ENCODE measurements at regions of chr7 and their contacts with region 1.

Region 1: GRCh38 chr7:106542550-106543220 is 118.3 kb downstream of the CCDC71L start:
- DNase-seq: peak; percentile 80
- H3K4me3 ChIP-seq: no peak overlapping the region
- H3K27ac ChIP-seq: peak overlapping the region; percentile 79
- H3K27me3 ChIP-seq: no peaks in the 10 kb centered on the region
- CTCF ChIP-seq: peak; percentile 78

Region 2: DNA sequence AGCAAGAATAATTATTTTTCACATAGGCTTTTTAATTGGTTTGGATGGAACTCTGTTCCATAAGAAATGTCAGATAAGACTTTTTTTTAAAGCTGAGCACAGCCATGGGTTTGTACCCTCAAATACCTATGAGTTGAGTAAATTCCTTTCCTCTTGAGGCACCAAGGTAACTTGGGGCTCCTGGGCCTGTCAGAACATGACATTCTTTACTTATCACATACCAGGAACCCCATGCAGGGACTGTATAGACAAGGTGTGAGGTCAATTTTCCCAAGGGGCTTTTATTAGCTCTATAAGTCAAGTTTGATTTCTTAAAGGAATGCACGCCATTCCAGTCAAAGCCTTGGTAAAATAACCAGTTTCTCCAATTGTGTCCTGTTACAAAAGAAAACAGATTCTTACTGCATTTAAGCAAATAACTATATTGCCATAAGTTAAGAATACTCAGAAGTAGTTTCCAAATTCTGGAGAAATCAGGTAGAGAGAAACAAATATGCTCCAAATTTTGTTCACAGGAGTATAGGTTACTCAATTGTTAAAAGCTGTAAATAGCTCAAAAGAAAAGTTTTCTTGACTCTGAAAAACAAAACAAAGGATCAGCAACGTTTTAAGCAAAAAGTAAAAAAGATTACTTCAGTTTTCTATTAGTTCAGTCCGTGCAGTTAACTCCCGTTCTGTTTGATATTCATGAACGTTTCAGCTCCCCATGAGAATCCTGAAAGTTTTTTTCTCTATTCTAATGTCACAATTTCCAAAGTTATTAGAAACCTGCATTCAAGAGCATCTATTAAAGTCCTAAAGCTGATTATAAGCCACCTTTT is 90.4 kb before region 1 on chr7:
- CTCF ChIA-PET with region 1: no interaction called
- POLR2A ChIA-PET with region 1: no interaction called
- DNase-seq: no peak
- H3K4me3 ChIP-seq: no peak overlapping the region
- H3K27ac ChIP-seq: no peak overlapping the region
- H3K27me3 ChIP-seq: no peaks in the 10 kb centered on the region
- CTCF ChIP-seq: no peak

Region 3: GRCh38 chr7:106552645-106553445 is 10.2 kb after region 1 on chr7:
- CTCF ChIA-PET with region 1: interaction called, 11 read pairs
- POLR2A ChIA-PET with region 1: no interaction called
- DNase-seq: no peak
- H3K4me3 ChIP-seq: no peak overlapping the region
- H3K27ac ChIP-seq: no peak overlapping the region
- H3K27me3 ChIP-seq: no peaks in the 10 kb centered on the region
- CTCF ChIP-seq: no peak

Region 4: DNA sequence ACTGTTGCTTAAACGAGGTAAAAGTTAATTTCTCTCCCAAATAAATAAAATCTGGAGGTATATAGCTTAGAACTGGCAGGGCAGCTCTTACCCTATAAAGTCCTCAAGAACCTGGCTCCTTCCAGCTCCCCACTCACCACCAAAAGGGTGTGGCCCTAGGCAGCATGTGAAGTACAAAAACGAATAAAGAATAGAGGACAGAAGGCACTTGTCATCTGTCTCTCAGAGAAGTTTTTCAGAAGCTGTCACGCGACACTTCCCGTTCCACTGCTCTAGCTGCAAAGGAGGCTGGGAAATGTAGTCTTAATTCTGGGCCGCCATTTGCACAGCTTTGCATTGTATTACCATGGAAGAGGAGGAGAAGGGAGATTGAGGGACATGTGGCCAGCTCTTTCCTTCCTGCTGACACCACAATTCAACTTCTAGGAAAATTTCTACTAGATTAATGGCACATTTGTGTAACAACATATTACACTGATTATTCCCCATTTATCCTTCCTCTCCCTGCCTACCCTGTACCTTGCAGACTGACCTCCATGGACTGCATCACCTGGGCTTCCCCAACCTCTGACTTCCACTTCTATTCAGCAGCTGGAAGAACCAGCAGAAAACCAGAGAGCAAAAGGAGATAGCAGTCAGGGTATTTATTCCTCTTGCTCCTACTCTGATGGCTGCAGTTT is 56.1 kb after region 1 on chr7:
- CTCF ChIA-PET with region 1: interaction called, 13 read pairs
- POLR2A ChIA-PET with region 1: no interaction called
- DNase-seq: peak; percentile 29
- H3K4me3 ChIP-seq: peak overlapping the region; percentile 55
- H3K27ac ChIP-seq: no peak overlapping the region
- H3K27me3 ChIP-seq: no peaks in the 10 kb centered on the region
- CTCF ChIP-seq: no peak

Region 5: DNA sequence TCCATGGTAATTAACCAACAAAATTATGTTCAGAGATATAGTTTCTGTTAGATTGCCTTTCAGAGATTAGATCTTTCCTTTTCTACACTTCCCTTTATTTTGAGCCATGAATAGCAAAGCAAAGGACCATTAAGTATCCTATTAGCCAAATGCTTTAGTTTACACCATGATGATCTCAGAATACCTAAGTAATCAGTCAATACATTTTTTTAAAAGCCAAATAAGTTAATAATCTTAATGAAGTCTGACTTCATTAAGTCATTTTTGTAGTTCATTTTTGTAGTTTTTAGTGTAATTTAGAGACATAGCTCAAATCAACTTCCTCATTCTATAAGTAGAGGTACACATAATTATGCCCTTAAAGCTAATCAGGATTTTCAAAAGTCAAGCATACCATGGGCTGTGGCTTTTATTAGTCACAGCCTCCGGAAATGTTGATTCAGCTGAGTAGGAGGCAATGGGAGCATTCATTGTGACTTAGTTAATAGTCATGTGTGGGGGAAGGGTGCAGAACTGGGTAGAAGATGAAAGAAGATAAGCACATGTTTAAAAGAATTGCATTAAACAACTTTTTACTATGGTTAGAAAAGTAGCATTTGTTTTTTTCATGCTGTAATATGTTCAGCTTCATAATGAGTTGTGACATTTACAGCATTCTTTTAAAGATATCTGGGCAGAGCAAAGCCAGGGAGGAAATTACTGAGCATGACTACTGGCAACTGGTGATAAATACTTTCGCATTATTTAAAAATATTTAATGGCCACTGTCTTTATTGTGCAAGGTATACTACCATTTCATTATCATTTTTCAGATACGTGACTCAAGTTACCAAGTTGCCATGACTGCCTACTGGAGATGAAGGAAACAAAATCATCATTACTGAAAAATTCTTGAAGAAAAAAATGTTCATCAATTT is 175.5 kb after region 1 on chr7:
- CTCF ChIA-PET with region 1: interaction called, 10 read pairs
- POLR2A ChIA-PET with region 1: no interaction called
- DNase-seq: peak; percentile 88
- H3K4me3 ChIP-seq: no peak overlapping the region
- H3K27ac ChIP-seq: peak overlapping the region; percentile 77
- H3K27me3 ChIP-seq: no peaks in the 10 kb centered on the region
- CTCF ChIP-seq: no peak

Measured in AG04450 (cell line).